ENCODE measurements at regions of chr14 and their contacts with region 1.

Region 1: DNA sequence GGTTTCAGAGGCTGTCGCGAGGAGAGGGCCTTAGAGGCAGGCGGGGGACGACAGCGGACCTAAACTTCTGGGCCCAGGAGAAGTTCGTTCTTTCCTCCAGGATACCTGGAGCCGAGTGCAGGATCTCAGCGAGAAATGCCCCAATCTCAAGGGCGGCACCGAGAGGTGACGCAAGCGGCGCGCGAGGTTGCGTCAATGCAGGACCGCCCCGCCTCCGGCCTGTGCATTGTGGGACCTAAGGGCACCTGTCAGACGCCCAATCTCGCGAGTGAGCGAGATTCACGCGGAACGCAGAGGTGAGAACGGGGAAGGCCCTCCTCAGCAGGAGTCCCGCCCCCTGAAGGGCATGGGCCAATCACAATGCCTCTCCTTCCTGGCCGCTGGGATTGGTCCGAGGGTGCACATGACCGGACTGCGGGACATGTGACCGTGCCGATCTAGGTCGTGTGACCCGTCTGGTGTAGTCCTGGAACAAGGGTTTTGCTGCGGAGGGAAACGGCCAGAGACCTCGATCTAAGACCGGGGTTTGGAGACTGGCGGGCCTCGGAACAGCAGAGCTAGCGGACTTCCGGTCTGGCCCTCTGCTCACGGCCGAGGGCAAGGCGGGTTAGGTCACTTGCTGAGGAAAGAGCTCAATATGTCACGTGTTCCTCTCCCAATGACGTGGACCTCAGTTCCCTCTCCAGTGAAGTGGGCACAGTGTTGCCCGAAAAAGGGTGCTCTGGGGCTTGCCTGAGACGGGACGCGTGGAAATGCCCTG is 16.3 kb upstream of the DYNC1H1 start:
- DNase-seq: peak; percentile 100
- H3K4me3 ChIP-seq: peak overlapping the region; percentile 56 to 92 (median 76)
- H3K27ac ChIP-seq: peak overlapping the region; percentile 86 to 99 (median 94)
- H3K4me1 ChIP-seq: peaks cover 10 to 35% (median 25%) of the 10 kb centered on the region in 4 donors
- H3K27me3 ChIP-seq: peaks cover 0 to 21% (median 0%) of the 10 kb centered on the region in 3 donors
- CTCF ChIP-seq: peak in 1 of 7 experiments; percentile 9
- EP300 ChIP-seq: peak; percentile 78
- POLR2A ChIP-seq: peak in 2 of 4 donors; percentile 88 to 98

Region 2: DNA sequence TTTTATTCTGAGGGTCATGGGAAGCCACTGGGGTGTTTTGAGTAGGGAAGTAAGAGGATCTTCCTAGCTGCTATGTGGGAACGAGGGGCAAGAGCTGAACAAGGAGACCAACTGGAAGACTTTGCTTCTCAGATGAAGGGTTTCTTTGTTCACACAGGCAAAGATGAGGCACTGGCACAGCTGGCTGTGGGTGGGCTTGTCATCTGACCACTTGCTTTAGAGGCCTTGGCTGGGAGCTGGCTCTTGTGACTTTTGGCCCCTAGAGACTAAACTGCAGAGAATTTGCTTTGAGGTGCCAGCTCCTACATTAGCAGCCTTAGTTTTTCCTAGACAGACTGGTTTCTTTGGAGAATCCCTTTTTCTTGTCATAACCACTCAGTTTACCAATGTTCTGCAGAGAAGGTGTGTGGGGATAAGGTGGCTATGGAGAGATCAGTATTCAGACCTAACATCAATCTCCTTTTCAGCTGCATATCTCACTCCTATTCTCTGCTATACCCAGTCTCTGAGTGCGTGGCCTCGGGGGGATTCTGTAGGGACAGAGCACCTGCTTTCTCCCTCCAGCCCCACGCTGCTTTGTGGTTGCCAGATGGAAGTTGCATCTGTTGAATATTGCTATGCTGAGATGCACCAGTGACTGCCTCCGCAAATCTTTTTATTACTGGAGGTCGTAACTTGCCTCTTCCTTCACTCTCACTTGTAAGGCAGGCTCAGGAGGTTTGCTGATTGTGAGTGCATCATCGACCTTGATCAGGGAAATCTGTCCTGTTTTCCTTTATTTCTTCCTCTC is 173.9 kb before region 1 on chr14:
- intact Hi-C with region 1: loop called (anchors 10 kb)
- DNase-seq: no peak
- H3K4me3 ChIP-seq: no peak overlapping the region
- H3K27ac ChIP-seq: no peak overlapping the region
- H3K4me1 ChIP-seq: peaks cover 0 to 9% (median 4%) of the 10 kb centered on the region in 4 donors
- H3K27me3 ChIP-seq: no peaks in the 10 kb centered on the region
- CTCF ChIP-seq: no peak
- EP300 ChIP-seq: no peak
- POLR2A ChIP-seq: no peak